Left ventricle myocardium inferior (tissue), 1 donor: ENCODE measurements at regions of chr5 and their contacts with region 1.

Region 1: DNA sequence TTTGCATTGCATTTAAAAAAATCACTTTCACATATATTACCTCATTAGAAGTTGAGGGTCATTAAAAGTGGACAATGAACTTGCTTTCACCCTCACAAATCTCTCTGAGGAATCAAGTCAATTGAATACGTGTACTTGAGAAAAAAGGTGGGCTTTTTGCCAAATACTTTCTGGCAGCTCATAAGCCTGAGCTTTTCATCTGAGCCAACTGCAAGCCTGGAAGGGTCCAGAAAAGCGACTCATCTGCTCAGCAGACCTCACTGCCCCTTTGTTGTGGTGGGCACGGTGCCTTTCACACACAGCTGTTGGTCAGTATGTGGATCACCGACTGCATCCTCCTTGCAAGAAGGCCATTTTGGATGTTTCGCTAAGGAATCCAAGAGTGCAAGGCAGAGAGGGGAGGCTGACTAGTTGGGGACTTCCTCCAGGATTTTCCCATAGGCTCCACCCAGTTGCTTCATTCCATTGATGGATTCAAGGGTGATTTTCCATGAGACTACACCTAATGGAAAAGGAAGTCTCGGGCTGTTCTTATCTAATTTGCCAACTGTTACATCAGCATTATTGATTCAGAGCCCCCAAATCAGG is 564.7 kb downstream of the PDE4D start:
- DNase-seq: peak; percentile 22
- H3K4me3 ChIP-seq: no peak overlapping the region
- H3K27ac ChIP-seq: peak overlapping the region; percentile 61
- H3K4me1 ChIP-seq: peaks cover 47% of the 10 kb centered on the region
- H3K27me3 ChIP-seq: no peaks in the 10 kb centered on the region
- CTCF ChIP-seq: no peak

Region 2: GRCh38 chr5:59275510-59276324 is 53.1 kb before region 1 on chr5:
- intact Hi-C with region 1: loop called (anchors 2 kb)
- DNase-seq: peak; percentile 38
- H3K4me3 ChIP-seq: peak overlapping the region; percentile 64
- H3K27ac ChIP-seq: peak overlapping the region; percentile 75
- H3K4me1 ChIP-seq: peaks cover 31% of the 10 kb centered on the region
- H3K27me3 ChIP-seq: no peaks in the 10 kb centered on the region
- CTCF ChIP-seq: no peak